ENCODE measurements at regions of chr3 and their contacts with region 1.

Region 1: GRCh38 chr3:182909318-182910040 is 70.9 kb downstream of the DCUN1D1 start:
- DNase-seq: peak in 3 of 14 experiments; percentile 30 to 34 (median 34)
- ATAC-seq: peak; percentile 30
- H3K4me3 ChIP-seq: no peak overlapping the region
- H3K4me3 Mint-ChIP-seq: no peak overlapping the region
- H3K27ac ChIP-seq: no peak overlapping the region
- H3K27ac Mint-ChIP-seq: peak overlapping the region; percentile 66
- H3K4me1 ChIP-seq: peaks cover 21% of the 10 kb centered on the region
- H3K4me1 Mint-ChIP-seq: peaks cover 51% of the 10 kb centered on the region
- H3K27me3 ChIP-seq: no peaks in the 10 kb centered on the region
- H3K27me3 Mint-ChIP-seq: no peaks in the 10 kb centered on the region
- CTCF ChIP-seq: peak; percentile 71

Region 2: GRCh38 chr3:183027276-183027675 is 117.8 kb after region 1 on chr3:
- CTCF ChIA-PET with region 1: no interaction called
- POLR2A ChIA-PET with region 1: no interaction called
- intact Hi-C with region 1: loop called in 1 of 2 experiments (anchors 10 kb)
- DNase-seq: no peak
- ATAC-seq: no peak
- H3K4me3 ChIP-seq: no peak overlapping the region
- H3K4me3 Mint-ChIP-seq: no peak overlapping the region
- H3K27ac ChIP-seq: no peak overlapping the region
- H3K27ac Mint-ChIP-seq: no peak overlapping the region
- H3K4me1 ChIP-seq: no peaks in the 10 kb centered on the region
- H3K4me1 Mint-ChIP-seq: no peaks in the 10 kb centered on the region
- H3K27me3 ChIP-seq: no peaks in the 10 kb centered on the region
- H3K27me3 Mint-ChIP-seq: no peaks in the 10 kb centered on the region
- CTCF ChIP-seq: no peak